Endothelial cell of umbilical vein (primary cell): ENCODE measurements at regions of chr15 and their contacts with region 1.

Region 1: GRCh38 chr15:39756806-39757522 is 25.7 kb downstream of the FSIP1 start:
- DNase-seq: peak; percentile 74
- H3K4me3 ChIP-seq: no peak overlapping the region
- H3K27ac ChIP-seq: no peak overlapping the region
- H3K4me1 ChIP-seq: no peaks in the 10 kb centered on the region
- H3K27me3 ChIP-seq: no peaks in the 10 kb centered on the region
- CTCF ChIP-seq: peak; percentile 49 to 51
- POLR2A ChIP-seq: no peak

Region 2: DNA sequence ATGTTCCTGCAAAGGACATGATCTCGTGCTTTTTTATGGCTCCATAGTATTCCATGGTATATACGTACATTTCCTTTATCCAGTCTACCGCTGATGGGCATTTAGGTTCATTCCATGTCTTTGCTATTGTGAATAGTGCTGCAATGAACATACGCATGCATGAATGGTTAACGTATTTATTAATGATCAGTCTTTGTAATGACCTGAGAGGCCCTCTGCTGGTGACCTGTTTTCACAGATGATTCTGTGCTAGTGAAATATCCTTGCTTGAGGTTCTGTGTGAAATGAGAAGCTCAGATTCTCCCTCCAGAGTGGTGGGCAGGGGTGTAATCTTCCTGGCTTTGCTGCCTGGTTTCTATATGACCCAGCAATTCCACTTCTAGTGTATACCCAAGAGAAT is 1032.1 kb before region 1 on chr15:
- CTCF ChIA-PET with region 1: no interaction called
- POLR2A ChIA-PET with region 1: no interaction called
- dilution Hi-C with region 1: loop called (anchors 25 kb)
- intact Hi-C with region 1: no loop called
- DNase-seq: no peak
- H3K4me3 ChIP-seq: no peak overlapping the region
- H3K27ac ChIP-seq: no peak overlapping the region
- H3K4me1 ChIP-seq: no peaks in the 10 kb centered on the region
- H3K27me3 ChIP-seq: peaks cover 4 to 7% of the 10 kb centered on the region in 2 experiments
- CTCF ChIP-seq: no peak
- POLR2A ChIP-seq: no peak

Region 3: DNA sequence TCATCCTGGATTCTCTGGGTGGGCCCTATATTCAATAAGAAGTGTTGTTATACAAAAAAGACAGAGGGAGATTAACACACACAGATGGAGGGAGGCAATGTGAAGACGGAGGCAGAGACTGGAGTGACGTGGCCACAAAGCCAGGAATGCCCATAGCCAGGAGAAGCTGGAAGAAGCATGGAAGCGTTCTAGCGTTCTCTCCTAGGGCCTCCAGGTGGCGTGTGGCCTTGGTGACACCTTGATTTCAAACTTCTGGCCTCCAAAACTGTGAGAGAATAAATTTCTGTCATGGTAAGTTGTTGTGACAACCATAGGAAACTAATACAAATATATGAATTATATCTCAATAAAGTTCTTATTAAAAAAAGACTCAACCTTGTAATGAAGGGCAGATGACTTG is 154.8 kb before region 1 on chr15:
- CTCF ChIA-PET with region 1: interaction called, 379 read pairs
- POLR2A ChIA-PET with region 1: interaction called, 49 read pairs
- dilution Hi-C with region 1: no loop called
- intact Hi-C with region 1: loop called (anchors 1 kb)
- DNase-seq: no peak
- H3K4me3 ChIP-seq: no peak overlapping the region
- H3K27ac ChIP-seq: no peak overlapping the region
- H3K4me1 ChIP-seq: peaks cover 7% of the 10 kb centered on the region
- H3K27me3 ChIP-seq: no peaks in the 10 kb centered on the region
- CTCF ChIP-seq: peak; percentile 24 to 31
- POLR2A ChIP-seq: no peak

Region 4: GRCh38 chr15:39672666-39673065 is 84.3 kb before region 1 on chr15:
- CTCF ChIA-PET with region 1: interaction called, 10 read pairs
- POLR2A ChIA-PET with region 1: no interaction called
- dilution Hi-C with region 1: no loop called
- intact Hi-C with region 1: no loop called
- DNase-seq: no peak
- H3K4me3 ChIP-seq: no peak overlapping the region
- H3K27ac ChIP-seq: no peak overlapping the region
- H3K4me1 ChIP-seq: no peaks in the 10 kb centered on the region
- H3K27me3 ChIP-seq: no peaks in the 10 kb centered on the region
- CTCF ChIP-seq: no peak
- POLR2A ChIP-seq: no peak

Region 5: DNA sequence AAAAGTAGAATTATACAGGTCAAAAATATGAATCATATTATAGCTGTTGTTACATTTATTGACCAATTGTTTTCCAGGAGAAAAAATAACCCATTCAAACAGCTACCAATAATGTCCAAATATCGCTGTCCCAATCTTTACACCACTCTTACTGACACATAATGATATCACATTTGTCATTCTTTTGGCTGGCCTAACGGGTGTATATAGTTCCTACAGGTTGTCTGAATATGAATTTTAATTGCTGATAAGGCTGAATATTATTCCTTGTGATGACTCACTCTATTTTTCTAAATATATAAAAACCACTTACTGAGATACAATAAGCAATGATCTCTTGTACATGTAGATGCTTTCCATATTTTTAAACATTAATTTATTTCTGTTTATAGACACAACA is 50.8 kb before region 1 on chr15:
- CTCF ChIA-PET with region 1: interaction called, 18 read pairs
- POLR2A ChIA-PET with region 1: no interaction called
- dilution Hi-C with region 1: no loop called
- intact Hi-C with region 1: no loop called
- DNase-seq: no peak
- H3K4me3 ChIP-seq: no peak overlapping the region
- H3K27ac ChIP-seq: no peak overlapping the region
- H3K4me1 ChIP-seq: no peaks in the 10 kb centered on the region
- H3K27me3 ChIP-seq: no peaks in the 10 kb centered on the region
- CTCF ChIP-seq: no peak
- POLR2A ChIP-seq: no peak

Region 6: DNA sequence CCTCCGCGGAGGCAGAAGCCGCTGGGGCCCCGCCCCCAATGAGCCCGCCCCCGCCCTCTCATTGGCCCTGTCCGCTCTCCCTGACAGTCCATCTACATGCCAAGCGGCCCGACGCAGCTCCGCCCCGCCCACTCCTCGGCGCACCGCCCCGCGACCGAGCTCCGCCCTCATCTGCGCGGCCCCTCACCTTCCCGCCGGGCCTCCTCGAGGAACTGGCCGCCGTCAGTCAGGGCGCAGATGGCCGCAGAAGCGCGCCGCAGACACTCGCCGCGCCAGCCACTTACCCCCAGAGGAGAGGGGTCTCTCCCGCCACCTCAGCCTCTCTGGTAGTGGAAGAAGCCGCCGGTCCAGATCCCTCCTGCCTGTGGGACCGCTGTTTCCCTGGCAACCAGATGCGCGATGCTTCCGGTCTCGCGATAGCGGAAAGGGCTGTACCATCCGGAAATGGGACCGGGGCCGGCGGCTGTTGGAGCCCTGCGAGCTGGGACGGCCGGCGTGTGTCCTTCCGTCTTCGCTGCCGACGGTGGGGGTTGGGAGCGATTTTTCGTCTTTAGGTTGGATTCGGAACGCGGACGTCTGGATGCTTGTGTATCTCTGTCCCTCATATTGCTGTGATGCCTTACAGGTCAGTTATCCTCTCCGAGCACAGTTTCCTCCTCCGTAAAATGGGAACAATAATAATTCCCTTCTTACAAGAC is 25.6 kb after region 1 on chr15 and contains the start of gene FSIP1:
- CTCF ChIA-PET with region 1: interaction called, 10 read pairs
- POLR2A ChIA-PET with region 1: no interaction called
- dilution Hi-C with region 1: no loop called
- intact Hi-C with region 1: no loop called
- DNase-seq: peak; percentile 97
- H3K4me3 ChIP-seq: peak within 1 kb of the TSS; percentile 87 to 98 (median 93)
- H3K27ac ChIP-seq: peak within 1 kb of the TSS; percentile 67
- H3K4me1 ChIP-seq: peaks cover 26% of the 10 kb centered on the region
- H3K27me3 ChIP-seq: no peaks in the 10 kb centered on the region
- CTCF ChIP-seq: no peak
- POLR2A ChIP-seq: peak; percentile 90
- total RNA-seq, gene FSIP1: 1.1 and 1.2 TPM in 2 replicates